ENCODE measurements at regions of chr2 and their contacts with region 1.

Region 1: GRCh38 chr2:227766373-227766883 is 20.7 kb downstream of the SCYGR8 start:
- DNase-seq: peak; percentile 78
- H3K4me3 Mint-ChIP-seq: no peak overlapping the region
- H3K27ac Mint-ChIP-seq: no peak overlapping the region
- H3K4me1 Mint-ChIP-seq: no peaks in the 10 kb centered on the region
- H3K27me3 Mint-ChIP-seq: no peaks in the 10 kb centered on the region

Region 2: GRCh38 chr2:226037526-226037925 is 1728.9 kb before region 1 on chr2:
- CTCF ChIA-PET with region 1: no interaction called
- intact Hi-C with region 1: no loop called
- DNase-seq: no peak
- H3K4me3 Mint-ChIP-seq: no peak overlapping the region
- H3K27ac Mint-ChIP-seq: no peak overlapping the region
- H3K4me1 Mint-ChIP-seq: peaks cover under 1% of the 10 kb centered on the region
- H3K27me3 Mint-ChIP-seq: peaks cover 49% of the 10 kb centered on the region

Region 3: DNA sequence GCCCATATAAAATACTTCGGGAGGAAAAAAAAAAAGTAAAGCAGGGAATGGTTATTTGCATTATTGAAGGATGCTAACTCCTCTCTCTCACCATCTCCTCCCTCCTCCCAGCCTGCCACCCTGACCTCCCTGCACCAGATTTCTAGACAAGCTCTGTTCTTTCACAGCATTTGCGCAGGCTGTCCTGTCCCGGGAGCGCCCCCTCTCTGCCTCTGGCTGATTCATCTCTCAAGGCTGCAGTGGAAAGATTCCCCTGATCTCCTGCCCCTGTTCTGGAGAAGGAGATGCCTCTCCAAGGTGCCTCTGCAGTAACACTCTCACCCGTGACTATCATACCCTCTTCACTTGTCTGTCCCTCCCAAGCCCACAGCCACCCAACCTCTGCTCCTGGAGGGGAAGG is 640.9 kb before region 1 on chr2:
- CTCF ChIA-PET with region 1: interaction called, 6 read pairs
- intact Hi-C with region 1: loop called (anchors 1 kb)
- DNase-seq: peak; percentile 20
- H3K4me3 Mint-ChIP-seq: no peak overlapping the region
- H3K27ac Mint-ChIP-seq: no peak overlapping the region
- H3K4me1 Mint-ChIP-seq: no peaks in the 10 kb centered on the region
- H3K27me3 Mint-ChIP-seq: peaks cover 13% of the 10 kb centered on the region

Region 4: DNA sequence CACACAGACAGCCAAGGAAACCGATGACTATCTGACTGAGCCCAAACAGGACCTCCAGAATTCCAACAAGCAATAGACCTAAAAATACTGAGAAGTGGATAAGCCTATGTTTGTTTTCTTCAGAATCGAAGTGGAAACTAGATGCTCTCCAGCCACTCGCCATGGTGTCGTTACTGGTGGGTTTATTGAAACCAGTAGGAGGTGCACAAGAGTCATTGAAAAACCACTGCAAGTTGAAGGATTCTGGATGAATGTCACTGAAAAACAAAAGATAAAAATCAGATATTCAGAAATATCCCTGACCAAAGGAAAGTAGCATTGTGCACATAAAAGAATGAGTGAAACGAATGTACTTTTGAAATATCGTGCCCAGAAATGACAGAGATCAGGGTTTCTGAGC is 402.7 kb before region 1 on chr2:
- CTCF ChIA-PET with region 1: interaction called, 3 read pairs
- intact Hi-C with region 1: loop called (anchors 2 kb)
- DNase-seq: no peak
- H3K4me3 Mint-ChIP-seq: no peak overlapping the region
- H3K27ac Mint-ChIP-seq: peak overlapping the region; percentile 11
- H3K4me1 Mint-ChIP-seq: peaks cover 6% of the 10 kb centered on the region
- H3K27me3 Mint-ChIP-seq: no peaks in the 10 kb centered on the region

Region 5: GRCh38 chr2:227479865-227480475 is 286.5 kb before region 1 on chr2:
- CTCF ChIA-PET with region 1: interaction called, 6 read pairs
- intact Hi-C with region 1: loop called (anchors 1 kb)
- DNase-seq: no peak
- H3K4me3 Mint-ChIP-seq: peak overlapping the region; percentile 17
- H3K27ac Mint-ChIP-seq: peak overlapping the region; percentile 82
- H3K4me1 Mint-ChIP-seq: peaks cover 81% of the 10 kb centered on the region
- H3K27me3 Mint-ChIP-seq: no peaks in the 10 kb centered on the region

Region 6: GRCh38 chr2:227592694-227593387 is 173.6 kb before region 1 on chr2:
- CTCF ChIA-PET with region 1: no interaction called
- intact Hi-C with region 1: no loop called
- DNase-seq: no peak
- H3K4me3 Mint-ChIP-seq: no peak overlapping the region
- H3K27ac Mint-ChIP-seq: no peak overlapping the region
- H3K4me1 Mint-ChIP-seq: peaks cover 2% of the 10 kb centered on the region
- H3K27me3 Mint-ChIP-seq: peaks cover 33% of the 10 kb centered on the region

Region 7: GRCh38 chr2:227713159-227713690 is 53.2 kb before region 1 on chr2:
- CTCF ChIA-PET with region 1: interaction called, 3 read pairs
- intact Hi-C with region 1: loop called (anchors 5 kb)
- DNase-seq: no peak
- H3K4me3 Mint-ChIP-seq: no peak overlapping the region
- H3K27ac Mint-ChIP-seq: no peak overlapping the region
- H3K4me1 Mint-ChIP-seq: no peaks in the 10 kb centered on the region
- H3K27me3 Mint-ChIP-seq: peaks cover 17% of the 10 kb centered on the region

Measured in activated naive CD4-positive, alpha-beta T cell treated with anti-CD3 and anti-CD28 coated beads for 36 hours (primary cell).